OCI-LY7 (cell line): ENCODE measurements at regions of chr5 and their contacts with region 1.

Region 1: DNA sequence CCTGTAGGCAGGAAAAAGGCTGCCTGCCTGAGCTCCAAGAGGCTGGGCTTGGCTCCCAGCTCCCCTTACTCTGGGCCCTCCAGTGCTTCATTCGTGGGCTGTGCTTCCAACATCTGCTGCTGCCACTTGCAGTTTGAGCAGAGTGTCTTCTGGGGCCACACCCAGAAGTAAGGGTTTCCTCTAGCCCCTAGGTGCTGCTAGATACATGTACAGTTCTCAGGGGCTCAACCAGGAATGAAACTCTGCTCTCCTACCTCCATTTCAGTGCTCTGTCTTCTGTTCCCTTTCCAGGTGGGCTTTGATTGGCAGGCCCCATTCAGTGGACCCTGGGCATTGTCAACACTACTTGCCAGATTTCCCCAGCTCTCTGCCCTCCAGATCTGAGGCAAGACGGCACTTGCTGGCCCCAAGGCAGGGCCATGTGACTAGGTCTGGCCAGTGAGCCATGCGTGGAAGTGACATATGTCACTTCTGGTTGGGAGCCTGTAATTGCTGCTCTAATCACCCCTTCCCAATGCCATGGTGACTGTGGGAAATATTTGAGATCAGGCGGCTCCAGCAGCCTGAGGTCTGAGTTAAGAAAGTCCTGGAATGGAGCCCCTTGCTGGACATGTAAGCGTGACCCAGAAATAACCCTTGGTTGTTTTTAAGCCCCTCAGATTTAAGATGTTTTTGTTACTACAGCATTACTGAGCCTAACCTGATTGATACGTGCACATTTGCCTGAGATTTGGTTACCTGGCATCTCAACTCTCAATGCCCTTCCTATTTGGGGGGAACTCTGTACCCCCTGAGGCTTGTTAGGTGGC is 9.4 kb upstream of the BOD1 start:
- DNase-seq: peak; percentile 83
- H3K4me3 ChIP-seq: no peak overlapping the region
- H3K27ac ChIP-seq: no peak overlapping the region
- H3K4me1 ChIP-seq: peaks cover 50% of the 10 kb centered on the region
- CTCF ChIP-seq: peak; percentile 78

Region 2: DNA sequence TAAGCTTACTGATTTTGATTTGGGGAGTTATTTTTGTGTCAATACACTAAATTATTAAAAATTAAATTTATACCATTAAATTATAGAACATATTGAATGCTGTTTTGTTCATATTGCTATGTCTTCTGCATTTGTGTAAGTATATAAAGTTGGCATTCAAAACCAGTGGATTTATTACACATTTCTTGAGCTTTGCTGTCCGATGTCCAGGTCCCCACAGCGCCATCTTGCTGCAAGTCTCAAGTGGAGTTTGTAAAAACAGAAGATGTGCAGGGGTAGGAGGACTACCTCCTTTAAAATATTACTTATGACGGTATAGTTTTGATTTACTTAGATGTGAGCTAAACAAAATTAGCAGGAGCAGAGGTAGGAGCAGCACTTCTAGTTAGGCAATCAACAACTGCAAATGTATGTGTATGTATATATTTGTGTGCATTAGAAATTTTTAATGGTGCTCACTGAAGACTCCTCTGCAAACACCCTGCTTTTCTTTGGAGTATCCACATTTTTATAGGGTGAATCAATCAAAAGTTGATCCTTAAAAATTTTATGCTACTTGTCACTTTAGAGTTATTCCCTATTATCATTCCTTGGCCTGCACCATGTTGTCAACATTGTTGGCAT is 299.7 kb after region 1 on chr5:
- CTCF ChIA-PET with region 1: interaction called, 3 read pairs
- POLR2A ChIA-PET with region 1: no interaction called
- intact Hi-C with region 1: loop called (anchors 1 kb)
- DNase-seq: peak; percentile 72
- H3K4me3 ChIP-seq: no peak overlapping the region
- H3K27ac ChIP-seq: peak overlapping the region; percentile 24
- H3K4me1 ChIP-seq: peaks cover 59% of the 10 kb centered on the region
- CTCF ChIP-seq: peak; percentile 95